Caco-2 (cell line): ENCODE measurements at regions of chr2 and their contacts with region 1.

Region 1: GRCh38 chr2:8681786-8682692 is at the start of gene ID2:
- DNase-seq: peak; percentile 99 to 100
- H3K4me3 ChIP-seq: peak within 1 kb of the TSS; percentile 75
- H3K4me3 Mint-ChIP-seq: peak within 1 kb of the TSS; percentile 81
- H3K27ac Mint-ChIP-seq: peak within 1 kb of the TSS; percentile 85
- H3K4me1 ChIP-seq: peaks cover 7% of the 10 kb centered on the region
- H3K4me1 Mint-ChIP-seq: peaks cover 6% of the 10 kb centered on the region
- H3K27me3 ChIP-seq: no peaks in the 10 kb centered on the region
- H3K27me3 Mint-ChIP-seq: no peaks in the 10 kb centered on the region
- CTCF ChIP-seq: no peak
- total RNA-seq, gene ID2: 90.9 and 101 TPM in 2 replicates

Region 2: DNA sequence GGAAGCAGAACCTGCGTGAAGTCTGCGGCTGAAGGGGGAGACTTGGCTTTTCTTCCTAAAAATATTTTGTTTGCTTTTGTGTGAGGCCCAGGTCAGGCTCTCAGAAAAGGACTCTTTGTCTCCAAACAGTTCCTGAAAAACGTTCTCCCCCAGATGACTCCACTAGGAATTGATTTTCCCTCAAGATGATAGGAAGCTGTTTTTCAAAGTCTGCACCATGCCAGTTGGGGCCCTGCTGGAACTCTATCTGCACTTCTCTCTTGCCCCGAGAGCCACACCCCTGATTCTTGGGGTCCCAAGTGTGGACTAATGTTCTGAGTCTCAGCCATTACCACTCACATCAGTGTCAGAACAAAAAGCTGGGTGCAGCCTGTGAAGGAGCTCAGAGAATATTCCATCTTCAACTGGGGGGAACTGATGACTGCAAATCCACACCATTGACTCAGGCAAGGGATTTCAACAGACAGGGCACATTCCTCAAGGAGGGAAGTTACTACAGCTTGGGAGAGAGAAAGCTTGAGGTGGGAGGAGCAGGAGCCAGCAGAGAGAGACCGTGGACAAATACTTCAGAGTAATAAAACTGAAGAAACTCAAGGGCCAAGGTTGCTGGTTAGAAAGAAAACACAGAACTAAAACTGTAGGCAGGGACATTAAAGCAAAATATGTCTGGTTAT is 996.6 kb before region 1 on chr2:
- CTCF ChIA-PET with region 1: no interaction called
- POLR2A ChIA-PET with region 1: interaction called, 4 read pairs
- intact Hi-C with region 1: loop called (anchors 10 kb)
- DNase-seq: peak; percentile 73 to 78
- H3K4me3 ChIP-seq: no peak overlapping the region
- H3K4me3 Mint-ChIP-seq: peak overlapping the region; percentile 45
- H3K27ac Mint-ChIP-seq: peak overlapping the region; percentile 96
- H3K4me1 ChIP-seq: peaks cover 50% of the 10 kb centered on the region
- H3K4me1 Mint-ChIP-seq: peaks cover 36% of the 10 kb centered on the region
- H3K27me3 ChIP-seq: no peaks in the 10 kb centered on the region
- H3K27me3 Mint-ChIP-seq: no peaks in the 10 kb centered on the region
- CTCF ChIP-seq: no peak

Region 3: DNA sequence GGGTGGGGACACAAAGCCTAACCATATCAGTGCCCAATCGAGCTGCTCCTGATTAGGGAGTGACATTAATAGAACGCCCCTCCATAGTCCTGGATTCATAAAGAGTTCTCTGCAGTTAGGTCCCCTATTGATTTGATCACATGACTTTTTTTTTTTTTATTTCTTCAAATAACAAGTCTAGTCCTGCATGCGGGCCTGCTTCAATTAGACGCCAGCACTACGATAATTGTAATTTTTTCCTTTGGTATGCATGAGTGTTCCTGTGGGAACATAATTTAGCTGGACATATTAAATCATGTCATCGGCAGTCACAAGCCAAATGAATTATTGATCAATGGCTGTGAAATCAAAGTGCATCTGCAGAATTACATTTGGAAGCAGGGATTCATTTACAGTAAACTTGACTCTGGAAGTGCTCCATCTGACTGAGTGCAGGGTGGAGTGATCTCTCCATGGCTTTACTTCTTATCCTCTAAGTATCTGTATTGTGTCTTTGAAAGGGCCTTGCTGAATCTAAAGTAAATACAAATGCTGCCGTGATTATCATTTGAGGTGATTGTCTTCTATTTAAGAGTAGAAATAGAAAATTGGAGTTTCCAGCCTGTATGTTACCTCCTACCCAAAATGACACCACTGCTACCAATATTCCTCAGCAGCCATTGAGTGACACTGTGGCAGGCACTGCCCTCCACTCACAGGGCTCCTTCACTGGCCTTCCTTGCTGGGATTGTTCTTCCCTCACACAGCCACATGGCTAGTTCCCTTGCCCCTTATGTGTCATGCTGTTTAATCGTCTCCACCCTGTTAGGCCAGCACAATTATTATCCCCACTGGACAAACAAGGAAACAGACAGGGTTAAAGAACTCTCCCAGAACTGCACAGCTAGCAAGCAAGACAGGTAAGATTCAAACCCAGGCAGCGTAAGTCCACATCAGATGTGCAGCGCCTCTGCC is 337.6 kb before region 1 on chr2:
- CTCF ChIA-PET with region 1: no interaction called
- POLR2A ChIA-PET with region 1: no interaction called
- intact Hi-C with region 1: loop called (anchors 10 kb)
- DNase-seq: no peak
- H3K4me3 ChIP-seq: no peak overlapping the region
- H3K4me3 Mint-ChIP-seq: no peak overlapping the region
- H3K27ac Mint-ChIP-seq: no peak overlapping the region
- H3K4me1 ChIP-seq: no peaks in the 10 kb centered on the region
- H3K4me1 Mint-ChIP-seq: peaks cover 6% of the 10 kb centered on the region
- H3K27me3 ChIP-seq: no peaks in the 10 kb centered on the region
- H3K27me3 Mint-ChIP-seq: no peaks in the 10 kb centered on the region
- CTCF ChIP-seq: no peak

Region 4: DNA sequence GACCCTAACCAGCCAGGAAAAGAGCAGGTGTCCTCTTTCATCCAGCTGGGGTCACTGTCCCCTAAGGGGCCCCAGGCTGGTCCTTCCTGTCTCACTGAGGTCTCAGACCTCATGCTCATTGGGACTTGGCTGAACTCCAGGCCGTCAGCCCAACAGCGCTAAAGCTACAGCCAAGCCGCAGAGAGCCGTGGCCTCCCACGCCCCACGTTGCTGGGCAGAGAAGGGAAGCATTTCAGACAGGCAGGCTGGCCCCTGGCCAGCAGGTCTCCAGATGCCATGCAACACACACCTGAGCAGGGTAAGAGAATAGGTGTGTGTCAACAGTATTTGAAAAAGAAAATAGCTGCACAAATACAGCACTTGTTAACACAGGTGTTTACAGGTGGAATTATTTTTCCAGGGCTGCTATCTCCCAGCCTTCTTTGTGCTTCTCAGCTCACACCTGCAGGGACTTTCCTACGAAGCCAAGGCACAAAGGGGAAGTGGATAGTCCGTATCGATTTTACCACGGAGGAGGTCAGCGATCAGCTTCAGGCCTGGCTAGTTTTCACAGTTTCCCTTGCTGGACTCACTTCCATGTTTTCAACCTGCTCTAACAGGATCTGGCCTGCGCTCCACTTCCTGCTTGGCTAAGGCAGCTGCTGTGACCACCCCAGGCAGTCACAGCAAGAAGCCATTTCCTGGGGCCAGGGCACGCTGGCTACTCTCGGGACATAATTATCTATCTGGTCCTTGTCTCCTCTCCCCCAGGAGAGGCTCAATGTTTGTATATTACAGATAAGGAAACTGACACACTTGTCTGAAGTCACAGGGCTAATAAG is 156.2 kb before region 1 on chr2:
- CTCF ChIA-PET with region 1: interaction called, 11 read pairs
- POLR2A ChIA-PET with region 1: interaction called, 15 read pairs
- intact Hi-C with region 1: loop called (anchors 1 kb)
- DNase-seq: peak; percentile 71 to 76
- H3K4me3 ChIP-seq: no peak overlapping the region
- H3K4me3 Mint-ChIP-seq: no peak overlapping the region
- H3K27ac Mint-ChIP-seq: peak overlapping the region; percentile 62
- H3K4me1 ChIP-seq: peaks cover 15% of the 10 kb centered on the region
- H3K4me1 Mint-ChIP-seq: peaks cover 18% of the 10 kb centered on the region
- H3K27me3 ChIP-seq: no peaks in the 10 kb centered on the region
- H3K27me3 Mint-ChIP-seq: no peaks in the 10 kb centered on the region
- CTCF ChIP-seq: peak; percentile 53 to 62

Region 5: DNA sequence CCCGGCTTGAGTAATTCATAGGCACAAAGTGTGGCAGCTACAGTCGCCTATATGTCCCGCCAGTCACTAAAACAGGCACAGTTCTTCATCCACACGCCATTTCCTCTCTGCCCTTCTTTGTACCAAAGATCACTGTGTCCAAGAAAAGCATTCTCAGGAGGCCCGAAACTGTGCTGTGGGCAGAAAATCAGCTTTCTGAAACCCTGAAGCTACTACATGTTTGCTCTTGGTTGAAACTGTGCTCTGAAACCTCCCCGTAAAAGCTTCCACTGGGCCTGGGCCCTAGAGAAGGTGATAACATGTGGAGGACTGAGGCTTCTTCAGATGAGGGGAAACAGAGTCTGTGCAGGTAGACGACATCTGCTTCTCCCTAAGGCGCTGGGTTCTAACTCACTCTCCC is 75.8 kb before region 1 on chr2:
- CTCF ChIA-PET with region 1: no interaction called
- POLR2A ChIA-PET with region 1: interaction called, 9 read pairs
- intact Hi-C with region 1: loop called (anchors 1 kb)
- DNase-seq: peak in 1 of 2 experiments; percentile 8
- H3K4me3 ChIP-seq: no peak overlapping the region
- H3K4me3 Mint-ChIP-seq: no peak overlapping the region
- H3K27ac Mint-ChIP-seq: peak overlapping the region; percentile 69
- H3K4me1 ChIP-seq: peaks cover 86% of the 10 kb centered on the region
- H3K4me1 Mint-ChIP-seq: peaks cover 69% of the 10 kb centered on the region
- H3K27me3 ChIP-seq: no peaks in the 10 kb centered on the region
- H3K27me3 Mint-ChIP-seq: no peaks in the 10 kb centered on the region
- CTCF ChIP-seq: no peak

Region 6: GRCh38 chr2:8633735-8634313 is 48.2 kb before region 1 on chr2:
- CTCF ChIA-PET with region 1: interaction called, 23 read pairs
- POLR2A ChIA-PET with region 1: interaction called, 26 read pairs
- intact Hi-C with region 1: no loop called
- DNase-seq: peak; percentile 85 to 93
- H3K4me3 ChIP-seq: peak overlapping the region; percentile 1; the same call in 1 of the 2 replicates
- H3K4me3 Mint-ChIP-seq: peak overlapping the region; percentile 54
- H3K27ac Mint-ChIP-seq: peak overlapping the region; percentile 88
- H3K4me1 ChIP-seq: peaks cover 77% of the 10 kb centered on the region
- H3K4me1 Mint-ChIP-seq: peaks cover 56% of the 10 kb centered on the region
- H3K27me3 ChIP-seq: no peaks in the 10 kb centered on the region
- H3K27me3 Mint-ChIP-seq: no peaks in the 10 kb centered on the region
- CTCF ChIP-seq: no peak